ENCODE measurements at regions of chr15 and their contacts with region 1.

Region 1: DNA sequence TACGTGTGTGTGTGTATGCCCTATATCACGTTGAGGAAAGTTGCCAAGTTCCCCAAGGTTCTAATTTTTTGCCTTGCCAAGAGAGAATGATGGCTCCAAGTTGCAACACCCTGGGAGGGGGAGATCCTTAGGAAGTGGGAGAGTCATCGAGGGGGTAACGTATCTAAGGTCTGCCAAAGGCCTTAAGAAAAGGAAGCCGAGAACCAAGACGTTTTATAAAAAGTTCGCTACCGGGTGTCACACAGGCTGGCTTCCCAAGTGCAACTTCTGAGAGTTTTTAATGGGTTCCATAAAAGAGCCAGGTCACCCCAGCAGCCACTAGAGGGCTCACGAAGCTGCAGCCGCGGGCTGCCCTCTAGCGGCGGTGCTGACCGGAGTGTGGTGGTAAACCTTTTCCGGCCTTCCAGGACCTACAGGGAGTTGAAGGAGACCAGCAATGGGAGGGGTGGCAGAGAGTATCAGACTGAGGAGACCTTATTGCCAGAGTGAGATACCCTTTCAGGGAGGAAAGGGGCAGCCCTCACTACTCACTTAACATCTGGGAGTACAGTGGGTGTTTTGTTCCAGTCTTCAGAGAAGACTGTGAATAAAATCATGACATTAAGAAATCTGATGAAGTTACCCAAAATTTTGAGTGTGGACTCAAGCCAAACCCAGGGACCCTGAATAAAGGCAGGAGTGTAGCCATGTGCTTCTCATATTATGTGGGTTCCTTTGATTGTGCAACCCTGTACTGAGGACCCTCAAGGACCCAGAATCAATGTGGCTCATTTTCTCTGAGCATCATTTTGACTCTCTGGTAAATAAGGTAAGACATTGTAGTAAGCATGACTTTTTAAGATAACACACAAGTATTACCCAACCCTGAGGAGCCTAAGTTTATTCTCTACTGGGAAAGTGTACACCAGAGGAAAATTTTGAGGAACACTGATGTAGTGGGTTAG is 2.5 kb upstream of the RFX7 start:
- DNase-seq: peak; percentile 76 to 89 (median 85)
- ATAC-seq: peak; percentile 90
- H3K4me3 ChIP-seq: peak overlapping the region; percentile 90
- H3K4me3 Mint-ChIP-seq: peak overlapping the region; percentile 75 to 96 (median 88)
- H3K27ac ChIP-seq: peak overlapping the region; percentile 65
- H3K27ac Mint-ChIP-seq: peak overlapping the region; percentile 55 to 99 (median 93)
- H3K4me1 ChIP-seq: peaks cover 11 to 15% of the 10 kb centered on the region in 2 donors
- H3K4me1 Mint-ChIP-seq: peaks cover 14 to 40% (median 35%) of the 10 kb centered on the region in 7 donors
- H3K27me3 ChIP-seq: no peaks in the 10 kb centered on the region
- H3K27me3 Mint-ChIP-seq: peaks cover 0 to 5% (median 0%) of the 10 kb centered on the region in 5 donors

Region 2: GRCh38 chr15:55290528-55291057 is 955.5 kb before region 1 on chr15:
- CTCF ChIA-PET with region 1: no interaction called
- POLR2A ChIA-PET with region 1: no interaction called
- intact Hi-C with region 1: loop called in 1 of 2 experiments (anchors 10 kb)
- DNase-seq: peak; percentile 72 to 84 (median 80)
- ATAC-seq: peak; percentile 87
- H3K4me3 ChIP-seq: peak overlapping the region; percentile 90
- H3K4me3 Mint-ChIP-seq: peak overlapping the region; percentile 85 to 95 (median 90)
- H3K27ac ChIP-seq: peak overlapping the region; percentile 95
- H3K27ac Mint-ChIP-seq: peak overlapping the region; percentile 87 to 94 (median 92)
- H3K4me1 ChIP-seq: peaks cover 13 to 14% of the 10 kb centered on the region in 2 donors
- H3K4me1 Mint-ChIP-seq: peaks cover 20 to 40% (median 34%) of the 10 kb centered on the region in 7 donors
- H3K27me3 ChIP-seq: no peaks in the 10 kb centered on the region
- H3K27me3 Mint-ChIP-seq: peaks cover 0 to 4% (median 0%) of the 10 kb centered on the region in 5 donors

Region 3: DNA sequence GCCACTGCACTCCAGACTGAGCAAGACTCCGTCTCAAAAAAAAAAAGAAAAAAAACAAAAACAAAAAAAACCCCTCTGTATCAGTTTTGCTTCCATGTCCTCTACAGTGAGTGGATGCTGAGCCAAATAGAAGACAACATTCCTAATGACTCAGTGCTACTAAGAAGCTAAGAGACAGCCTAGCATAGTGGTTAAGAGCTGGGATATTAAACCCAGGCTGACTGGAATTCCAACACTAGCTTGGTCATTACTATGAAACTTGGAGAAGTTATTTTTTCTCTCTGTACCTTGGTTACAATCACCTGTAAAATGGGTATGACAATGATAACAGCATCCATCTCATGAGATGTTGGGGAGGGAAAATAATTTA is 597.1 kb before region 1 on chr15:
- CTCF ChIA-PET with region 1: no interaction called
- POLR2A ChIA-PET with region 1: no interaction called
- intact Hi-C with region 1: loop called in 1 of 2 experiments (anchors 1 kb)
- DNase-seq: no peak
- ATAC-seq: no peak
- H3K4me3 ChIP-seq: no peak overlapping the region
- H3K4me3 Mint-ChIP-seq: no peak overlapping the region
- H3K27ac ChIP-seq: no peak overlapping the region
- H3K27ac Mint-ChIP-seq: no peak overlapping the region
- H3K4me1 ChIP-seq: no peaks in the 10 kb centered on the region
- H3K4me1 Mint-ChIP-seq: no peaks in the 10 kb centered on the region
- H3K27me3 ChIP-seq: no peaks in the 10 kb centered on the region
- H3K27me3 Mint-ChIP-seq: peaks cover 0 to 6% (median 0%) of the 10 kb centered on the region in 5 donors

Region 4: DNA sequence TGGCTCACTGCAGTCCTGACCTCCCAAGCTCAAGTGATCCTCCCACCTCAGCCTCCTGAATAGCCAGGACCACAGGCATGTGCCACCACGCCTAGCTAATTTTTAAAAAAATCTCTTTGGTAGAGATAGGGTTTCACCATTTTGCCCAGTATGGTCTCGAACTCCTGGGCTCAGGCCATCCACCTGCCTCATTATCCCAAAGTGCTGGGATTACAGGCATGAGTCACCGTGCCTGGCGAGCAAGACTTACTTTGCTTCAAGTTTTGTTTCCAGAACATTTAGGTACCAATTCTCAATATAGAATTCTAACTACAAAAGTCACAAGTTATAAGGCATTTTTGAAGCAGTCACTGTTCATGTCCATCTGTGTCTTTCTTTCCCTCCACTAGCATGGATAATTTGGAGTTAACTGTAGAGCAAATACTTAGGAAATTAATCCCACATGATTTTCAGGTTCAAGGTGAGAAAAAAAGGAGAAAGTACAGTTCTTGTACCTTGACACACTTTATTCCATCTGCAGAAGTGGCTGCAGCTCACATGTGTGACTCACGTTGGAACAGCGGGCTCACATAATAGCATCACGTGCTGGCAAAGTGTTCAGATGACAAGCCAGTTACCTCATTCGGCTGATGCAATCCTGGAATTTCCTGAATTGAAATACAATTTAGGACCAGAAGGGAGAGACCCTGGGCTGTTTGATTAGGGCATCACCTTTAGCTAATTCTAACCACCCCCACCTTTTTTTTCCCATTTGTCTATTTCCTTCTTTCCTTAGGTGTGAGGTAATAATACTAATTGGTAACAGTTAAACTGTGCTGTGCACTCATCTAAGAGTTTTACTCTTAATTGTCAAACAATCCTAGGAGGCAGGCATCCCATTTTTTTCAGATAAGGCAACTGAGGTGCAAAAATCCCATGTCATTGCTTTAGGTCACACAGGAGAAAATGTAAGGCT is 205.8 kb before region 1 on chr15:
- CTCF ChIA-PET with region 1: no interaction called
- POLR2A ChIA-PET with region 1: no interaction called
- intact Hi-C with region 1: loop called (anchors 2 to 5 kb)
- DNase-seq: no peak
- ATAC-seq: no peak
- H3K4me3 ChIP-seq: no peak overlapping the region
- H3K4me3 Mint-ChIP-seq: no peak overlapping the region
- H3K27ac ChIP-seq: no peak overlapping the region
- H3K27ac Mint-ChIP-seq: peak overlapping the region in 1 of 9 donors; percentile 26
- H3K4me1 ChIP-seq: peaks cover 20 to 24% of the 10 kb centered on the region in 2 donors
- H3K4me1 Mint-ChIP-seq: peaks cover 8 to 62% (median 46%) of the 10 kb centered on the region in 7 donors
- H3K27me3 ChIP-seq: no peaks in the 10 kb centered on the region
- H3K27me3 Mint-ChIP-seq: peaks cover 0 to 2% (median 0%) of the 10 kb centered on the region in 5 donors

Region 5: GRCh38 chr15:56365075-56365711 is 119.0 kb after region 1 on chr15 and contains the start of gene TEX9:
- CTCF ChIA-PET with region 1: no interaction called
- POLR2A ChIA-PET with region 1: no interaction called
- intact Hi-C with region 1: loop called in 1 of 2 experiments (anchors 2 kb)
- DNase-seq: peak; percentile 8 to 78 (median 48)
- ATAC-seq: peak; percentile 90
- H3K4me3 ChIP-seq: peak within 1 kb of the TSS; percentile 39
- H3K4me3 Mint-ChIP-seq: peak within 1 kb of the TSS; percentile 78 to 94 (median 88)
- H3K27ac ChIP-seq: no peak within 1 kb of the TSS
- H3K27ac Mint-ChIP-seq: peak within 1 kb of the TSS in 3 of 9 donors; percentile 7 to 48 (median 28)
- H3K4me1 ChIP-seq: peaks cover 0 to 5% of the 10 kb centered on the region in 2 donors
- H3K4me1 Mint-ChIP-seq: peaks cover 10 to 18% (median 16%) of the 10 kb centered on the region in 7 donors
- H3K27me3 ChIP-seq: no peaks in the 10 kb centered on the region
- H3K27me3 Mint-ChIP-seq: peaks cover 42 to 81% (median 50%) of the 10 kb centered on the region in 5 donors
- total RNA-seq, gene TEX9: 1.6 to 3.1 (median 1.9) TPM

Region 6: DNA sequence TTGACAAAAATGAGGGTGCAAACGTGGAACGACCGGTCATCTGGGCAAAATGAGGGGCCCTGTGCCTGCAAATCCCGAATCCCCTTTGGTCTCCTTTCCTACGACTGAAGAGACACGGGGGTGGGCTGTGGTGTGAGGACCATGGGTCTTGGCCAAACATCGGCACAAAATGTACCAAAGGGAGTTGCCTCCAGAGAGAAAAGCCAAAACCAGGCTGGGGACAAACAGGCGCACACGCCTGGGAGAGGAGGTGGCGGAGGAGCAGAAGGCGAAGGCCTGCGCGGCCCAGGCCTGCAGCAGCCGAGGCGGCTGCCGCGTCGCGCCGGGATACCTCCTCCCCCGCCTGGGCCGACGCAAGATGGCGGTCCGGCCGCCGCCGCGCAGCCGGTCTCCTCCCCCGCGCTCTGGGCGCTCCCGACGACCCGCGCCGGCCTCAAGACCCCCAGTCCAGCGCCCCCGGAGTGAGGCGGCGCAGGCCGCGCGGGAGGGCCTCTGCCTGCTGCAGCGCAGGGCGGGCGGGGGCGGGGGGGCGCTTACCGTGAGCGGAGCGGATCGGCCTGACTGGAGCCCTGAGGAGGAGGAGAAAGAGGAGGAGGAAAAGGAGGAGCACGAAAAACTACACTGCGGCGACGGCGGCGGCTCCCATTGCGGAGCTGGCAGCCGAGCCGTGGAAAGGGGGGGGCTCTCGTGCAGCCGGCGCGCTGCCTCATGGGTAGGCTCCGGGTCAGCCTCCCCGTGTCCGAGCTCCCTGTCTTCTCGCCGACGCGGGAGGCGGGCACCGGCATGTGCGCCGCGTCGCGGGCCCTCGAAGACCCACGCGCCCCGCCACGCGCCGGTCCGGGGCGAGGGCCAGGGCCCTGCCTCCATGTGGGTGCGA is 487.0 kb after region 1 on chr15 and contains the start of gene ZNF280D:
- CTCF ChIA-PET with region 1: no interaction called
- POLR2A ChIA-PET with region 1: no interaction called
- intact Hi-C with region 1: loop called in 1 of 2 experiments (anchors 5 kb)
- DNase-seq: peak; percentile 58 to 82 (median 76)
- ATAC-seq: peak; percentile 91
- H3K4me3 ChIP-seq: peak within 1 kb of the TSS; percentile 86
- H3K4me3 Mint-ChIP-seq: peak within 1 kb of the TSS; percentile 92 to 99 (median 94)
- H3K27ac ChIP-seq: peak within 1 kb of the TSS; percentile 80
- H3K27ac Mint-ChIP-seq: peak within 1 kb of the TSS; percentile 90 to 98 (median 95)
- H3K4me1 ChIP-seq: peaks cover 23 to 25% of the 10 kb centered on the region in 2 donors
- H3K4me1 Mint-ChIP-seq: peaks cover 25 to 45% (median 35%) of the 10 kb centered on the region in 7 donors
- H3K27me3 ChIP-seq: no peaks in the 10 kb centered on the region
- H3K27me3 Mint-ChIP-seq: peaks cover 0 to 2% (median 0%) of the 10 kb centered on the region in 5 donors
- total RNA-seq, gene ZNF280D: 36.9 to 59.0 (median 41.1) TPM

Region 7: DNA sequence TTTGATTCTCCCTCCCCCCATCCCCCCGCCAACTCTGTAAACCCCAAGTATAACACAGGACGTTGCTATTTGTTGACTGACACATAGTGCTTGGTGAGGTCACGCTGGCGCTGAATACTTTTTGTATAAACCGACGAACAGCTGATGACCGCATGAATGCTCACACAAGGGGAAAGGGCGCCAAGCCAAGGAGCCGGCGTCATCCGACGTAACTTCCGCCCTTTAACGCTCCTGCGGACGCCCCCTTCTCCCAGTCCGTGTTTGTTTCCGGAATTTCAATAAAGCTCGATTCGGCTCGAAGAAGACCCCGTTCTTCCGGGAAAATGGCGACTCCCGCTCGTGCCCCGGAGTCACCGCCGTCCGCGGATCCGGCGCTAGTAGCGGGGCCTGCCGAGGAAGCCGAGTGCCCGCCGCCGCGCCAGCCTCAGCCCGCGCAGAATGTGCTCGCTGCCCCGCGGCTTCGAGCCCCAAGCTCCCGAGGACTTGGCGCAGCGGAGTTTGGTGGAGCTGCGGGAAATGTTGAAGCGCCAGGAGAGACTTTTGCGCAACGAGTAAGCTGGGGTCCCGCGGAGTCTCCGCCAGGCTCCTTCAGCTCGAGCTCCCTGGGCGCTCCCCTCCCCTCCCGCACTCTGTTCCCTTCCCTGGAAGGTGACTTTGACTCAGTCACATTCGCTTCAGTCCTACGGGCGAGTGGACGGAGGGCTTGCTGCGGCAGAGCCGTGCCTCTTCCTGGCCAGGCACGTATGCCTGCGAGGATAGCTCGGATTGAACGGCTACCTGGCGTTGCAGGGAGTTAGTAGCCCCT is 1460.5 kb after region 1 on chr15 and contains the start of gene POLR2M:
- CTCF ChIA-PET with region 1: no interaction called
- POLR2A ChIA-PET with region 1: interaction called, 3 read pairs
- intact Hi-C with region 1: loop called in 1 of 2 experiments (anchors 5 kb)
- DNase-seq: peak; percentile 67 to 97 (median 91)
- ATAC-seq: peak; percentile 94
- H3K4me3 ChIP-seq: peak within 1 kb of the TSS; percentile 88
- H3K4me3 Mint-ChIP-seq: peak within 1 kb of the TSS; percentile 83 to 93 (median 89)
- H3K27ac ChIP-seq: peak within 1 kb of the TSS; percentile 92
- H3K27ac Mint-ChIP-seq: peak within 1 kb of the TSS; percentile 63 to 99 (median 97)
- H3K4me1 ChIP-seq: peaks cover 17 to 38% of the 10 kb centered on the region in 2 donors
- H3K4me1 Mint-ChIP-seq: peaks cover 51 to 96% (median 94%) of the 10 kb centered on the region in 7 donors
- H3K27me3 ChIP-seq: no peaks in the 10 kb centered on the region
- H3K27me3 Mint-ChIP-seq: peaks cover 0 to 3% (median 0%) of the 10 kb centered on the region in 5 donors
- total RNA-seq, gene POLR2M: 67.0 to 105 (median 82.9) TPM